Panc1 (cell line): ENCODE measurements at regions of chr1 and their contacts with region 1.

Region 1: GRCh38 chr1:220046052-220046930 is at the start of gene EPRS1:
- DNase-seq: peak; percentile 94
- ATAC-seq: peak; percentile 99
- H3K4me3 ChIP-seq: peak within 1 kb of the TSS; percentile 86 to 92
- H3K27ac ChIP-seq: peak within 1 kb of the TSS; percentile 95
- H3K4me1 ChIP-seq: peaks cover 4% of the 10 kb centered on the region; the same call in 1 of the 2 replicates
- H3K27me3 ChIP-seq: no peaks in the 10 kb centered on the region
- CTCF ChIP-seq: peak; percentile 76
- total RNA-seq, gene EPRS1: 143 TPM

Region 2: GRCh38 chr1:218529646-218530310 is 1516.5 kb before region 1 on chr1:
- CTCF ChIA-PET with region 1: no interaction called
- POLR2A ChIA-PET with region 1: interaction called, 11 read pairs
- in situ Hi-C with region 1: no loop called
- intact Hi-C with region 1: no loop called
- DNase-seq: no peak
- ATAC-seq: no peak
- H3K4me3 ChIP-seq: no peak overlapping the region
- H3K27ac ChIP-seq: peak overlapping the region; percentile 54; the same call in 1 of the 2 replicates
- H3K4me1 ChIP-seq: peaks cover 11% of the 10 kb centered on the region; the same call in 1 of the 2 replicates
- H3K27me3 ChIP-seq: no peaks in the 10 kb centered on the region
- CTCF ChIP-seq: no peak

Region 3: GRCh38 chr1:219518168-219518907 is 528.0 kb before region 1 on chr1:
- CTCF ChIA-PET with region 1: no interaction called
- POLR2A ChIA-PET with region 1: no interaction called
- in situ Hi-C with region 1: no loop called
- intact Hi-C with region 1: no loop called
- DNase-seq: no peak
- ATAC-seq: no peak
- H3K4me3 ChIP-seq: no peak overlapping the region
- H3K27ac ChIP-seq: no peak overlapping the region
- H3K4me1 ChIP-seq: no peaks in the 10 kb centered on the region
- H3K27me3 ChIP-seq: no peaks in the 10 kb centered on the region
- CTCF ChIP-seq: no peak

Region 4: GRCh38 chr1:220089650-220090556 is 43.6 kb after region 1 on chr1 and contains the start of gene BPNT1:
- CTCF ChIA-PET with region 1: interaction called, 14 read pairs
- POLR2A ChIA-PET with region 1: no interaction called
- in situ Hi-C with region 1: no loop called
- intact Hi-C with region 1: no loop called
- DNase-seq: peak; percentile 95
- ATAC-seq: peak; percentile 85
- H3K4me3 ChIP-seq: peak within 1 kb of the TSS; percentile 83 to 85
- H3K27ac ChIP-seq: peak within 1 kb of the TSS; percentile 85
- H3K4me1 ChIP-seq: no peaks in the 10 kb centered on the region
- H3K27me3 ChIP-seq: no peaks in the 10 kb centered on the region
- CTCF ChIP-seq: no peak
- total RNA-seq, gene BPNT1: 20.8 TPM

Region 5: GRCh38 chr1:220420726-220421125 is 374.4 kb after region 1 on chr1:
- CTCF ChIA-PET with region 1: no interaction called
- POLR2A ChIA-PET with region 1: no interaction called
- in situ Hi-C with region 1: no loop called
- intact Hi-C with region 1: no loop called
- DNase-seq: no peak
- ATAC-seq: no peak
- H3K4me3 ChIP-seq: no peak overlapping the region
- H3K27ac ChIP-seq: no peak overlapping the region
- H3K4me1 ChIP-seq: no peaks in the 10 kb centered on the region; the same call in 1 of the 2 replicates
- H3K27me3 ChIP-seq: no peaks in the 10 kb centered on the region
- CTCF ChIP-seq: no peak